ENCODE measurements at regions of chr3 and their contacts with region 1.

Region 1: DNA sequence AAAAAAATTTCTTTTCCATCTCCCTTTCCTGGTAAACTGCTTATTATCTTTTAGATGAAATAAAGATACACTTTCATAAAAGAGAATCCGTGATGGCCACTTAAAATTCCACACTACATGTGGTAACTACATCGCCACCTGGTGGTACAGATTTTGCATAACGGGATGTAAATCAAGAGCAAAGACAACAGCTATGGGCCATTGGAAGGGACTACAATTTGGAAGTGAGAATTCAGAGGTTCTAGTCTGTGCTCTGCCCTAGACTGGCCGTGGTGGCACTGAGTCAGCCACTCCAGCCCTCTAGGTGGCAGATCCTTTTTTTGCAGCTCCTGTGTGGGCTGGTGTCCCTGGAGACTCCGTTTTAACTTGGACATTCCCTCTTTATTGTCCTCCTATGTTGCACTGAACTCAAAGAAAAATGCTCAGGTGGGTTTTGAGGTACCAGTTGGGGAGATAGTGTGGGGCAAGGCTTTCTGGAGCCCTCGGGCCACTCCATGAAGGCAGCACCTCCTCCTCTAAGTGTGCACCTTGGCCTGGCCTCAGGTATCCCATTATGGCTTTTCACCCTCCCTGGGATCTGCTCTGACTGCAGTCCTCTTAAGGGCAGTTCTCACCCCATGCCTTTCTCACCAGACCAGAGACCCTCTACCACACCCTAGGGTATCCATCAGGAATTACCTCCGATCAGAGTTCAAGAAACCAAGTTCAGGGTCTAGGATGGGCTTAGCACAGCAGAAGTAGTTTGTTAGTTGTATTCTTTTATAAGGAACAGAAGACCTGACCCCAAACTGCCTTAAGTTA is 54.9 kb downstream of the SPSB4 start:
- DNase-seq: peak; percentile 82
- H3K4me3 ChIP-seq: no peak overlapping the region
- H3K27ac ChIP-seq: no peak overlapping the region
- H3K4me1 ChIP-seq: no peaks in the 10 kb centered on the region
- H3K27me3 ChIP-seq: no peaks in the 10 kb centered on the region
- CTCF ChIP-seq: peak; percentile 65 to 80 (median 78)
- POLR2A ChIP-seq: no peak

Region 2: GRCh38 chr3:141011997-141012262 is 94.1 kb before region 1 on chr3:
- intact Hi-C with region 1: loop called (anchors 1 kb)
- DNase-seq: no peak
- H3K4me3 ChIP-seq: no peak overlapping the region
- H3K27ac ChIP-seq: no peak overlapping the region
- H3K4me1 ChIP-seq: no peaks in the 10 kb centered on the region
- H3K27me3 ChIP-seq: no peaks in the 10 kb centered on the region
- CTCF ChIP-seq: no peak
- POLR2A ChIP-seq: no peak

Region 3: DNA sequence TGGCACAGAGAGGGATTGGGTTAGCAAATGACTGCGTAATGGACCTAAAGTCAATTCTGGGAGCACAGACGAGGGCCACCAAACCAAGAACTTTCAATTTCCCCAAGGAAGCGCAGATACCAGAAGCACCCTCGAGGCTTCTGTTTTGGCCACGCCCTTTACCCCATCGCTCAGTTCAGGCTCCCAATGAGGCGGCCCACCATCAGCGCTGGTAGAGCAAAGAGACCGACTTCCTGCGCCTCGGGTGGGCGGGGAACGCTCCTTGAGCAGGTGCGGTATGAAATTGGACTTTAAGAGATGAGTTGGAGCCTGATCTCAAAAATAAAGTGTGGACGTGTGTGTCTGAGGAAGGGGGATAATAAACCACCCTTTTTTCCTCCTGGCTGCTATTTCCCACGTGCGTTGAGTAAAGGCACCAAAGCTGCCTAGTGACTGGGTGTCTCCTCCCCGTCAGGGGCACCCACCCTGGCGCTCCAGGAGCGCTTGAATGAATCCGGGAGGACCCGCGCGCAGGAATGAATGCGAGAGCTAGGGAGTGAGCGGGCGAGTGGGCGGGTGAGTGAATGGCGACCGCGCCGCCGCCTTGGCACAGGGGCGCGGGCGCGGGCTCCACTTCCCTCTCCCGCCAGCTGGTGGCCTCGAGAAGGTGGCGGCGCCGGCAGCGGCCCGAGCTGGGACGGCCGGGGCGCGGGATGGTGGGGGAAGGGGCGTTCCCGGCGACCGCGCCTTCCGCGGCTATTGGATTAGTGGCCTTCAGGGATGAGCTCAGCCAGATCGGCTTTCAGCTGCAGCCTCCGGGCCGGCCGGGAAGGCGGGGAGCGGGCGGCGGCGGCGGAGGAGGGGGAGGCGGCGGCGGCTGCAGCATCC is 55.2 kb before region 1 on chr3 and contains the start of gene SPSB4:
- intact Hi-C with region 1: loop called (anchors 2 kb)
- DNase-seq: no peak
- H3K4me3 ChIP-seq: peak within 1 kb of the TSS; percentile 12 to 21
- H3K27ac ChIP-seq: no peak within 1 kb of the TSS
- H3K4me1 ChIP-seq: peaks cover 6% of the 10 kb centered on the region
- H3K27me3 ChIP-seq: peaks cover 7% of the 10 kb centered on the region
- CTCF ChIP-seq: peak in 1 of 4 experiments; percentile 6
- POLR2A ChIP-seq: no peak
- total RNA-seq, gene SPSB4: 1.0 TPM in 1 of 2 donors, not detected in the other

Region 4: GRCh38 chr3:141192345-141192744 is 86.3 kb after region 1 on chr3:
- intact Hi-C with region 1: loop called (anchors 5 kb)
- DNase-seq: peak; percentile 95
- H3K4me3 ChIP-seq: no peak overlapping the region
- H3K27ac ChIP-seq: no peak overlapping the region
- H3K4me1 ChIP-seq: no peaks in the 10 kb centered on the region
- H3K27me3 ChIP-seq: no peaks in the 10 kb centered on the region
- CTCF ChIP-seq: peak; percentile 88 to 99 (median 98)
- POLR2A ChIP-seq: no peak

Region 5: DNA sequence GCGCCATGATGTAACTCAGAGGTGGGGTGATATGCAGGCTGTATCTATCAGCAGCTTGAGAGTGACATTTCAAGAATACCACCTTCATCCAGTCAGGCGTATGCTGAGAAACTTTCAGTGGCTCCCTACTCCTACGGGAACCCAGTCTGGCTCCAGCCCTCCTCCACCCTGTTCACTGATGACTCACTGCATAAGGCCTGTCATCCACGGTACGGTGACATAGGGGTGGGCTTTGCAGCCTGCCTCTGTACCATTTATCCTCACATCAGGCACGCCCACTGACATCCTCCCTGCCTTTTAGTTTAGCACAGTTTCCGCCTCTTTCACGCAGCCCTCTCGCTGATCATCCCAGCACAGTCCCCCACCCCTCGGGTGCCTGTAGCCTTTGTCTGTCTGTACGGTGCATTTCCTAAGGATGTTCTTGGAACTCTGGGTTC is 137.3 kb after region 1 on chr3:
- intact Hi-C with region 1: no loop called
- DNase-seq: no peak
- H3K4me3 ChIP-seq: no peak overlapping the region
- H3K27ac ChIP-seq: no peak overlapping the region
- H3K4me1 ChIP-seq: no peaks in the 10 kb centered on the region
- H3K27me3 ChIP-seq: no peaks in the 10 kb centered on the region
- CTCF ChIP-seq: no peak
- POLR2A ChIP-seq: no peak

Measured in prostate gland (tissue), 2 donors.